ENCODE measurements at regions of chr6 and their contacts with region 1.

Region 1: DNA sequence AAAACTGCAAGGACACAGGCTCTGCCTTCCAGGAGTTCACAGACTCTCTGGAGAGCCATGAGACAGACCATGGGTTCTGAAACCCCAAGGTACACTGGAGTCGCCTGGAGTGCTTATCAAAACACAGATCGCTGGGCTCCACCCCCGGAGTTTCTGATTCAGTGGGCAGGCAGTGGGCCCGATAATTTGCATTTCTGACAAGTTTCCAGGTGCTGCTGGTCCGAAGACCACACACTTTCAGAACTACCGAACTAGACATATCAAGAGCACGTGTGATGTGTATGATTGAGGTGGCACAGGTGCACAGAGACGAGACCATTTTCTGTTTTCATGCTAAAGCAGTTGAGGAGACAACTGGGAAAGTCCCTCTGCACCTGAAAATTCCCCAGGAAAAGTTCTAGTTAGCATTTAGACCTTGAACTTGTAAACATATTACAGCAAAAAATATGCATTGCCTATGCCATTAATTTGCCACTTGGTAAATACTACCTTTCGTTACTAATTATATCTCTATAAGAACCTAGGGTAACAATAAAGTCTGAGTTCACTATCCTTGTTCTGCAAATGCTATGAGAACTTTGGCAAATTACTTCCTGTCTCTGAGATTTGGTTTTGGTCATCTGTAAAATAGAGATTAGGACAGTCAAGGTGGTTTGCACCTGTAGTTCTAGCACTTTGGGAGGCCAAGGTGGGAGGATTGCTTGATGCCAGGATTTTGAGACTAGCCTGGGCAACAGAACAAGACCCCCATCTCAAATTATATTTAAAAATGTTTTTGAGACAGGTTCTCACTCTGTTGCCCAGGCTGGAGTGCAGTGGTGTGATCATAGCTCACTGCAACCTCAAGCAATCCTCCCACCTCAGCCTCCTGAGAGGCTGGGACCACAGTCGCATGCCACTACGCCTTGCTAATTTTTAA is 14.3 kb upstream of the PIM1 start:
- DNase-seq: peak; percentile 91
- ATAC-seq: peak; percentile 88
- H3K4me3 ChIP-seq: peak overlapping the region in 2 of 5 experiments; percentile 23 to 58
- H3K4me3 Mint-ChIP-seq: peak overlapping the region; percentile 50
- H3K27ac ChIP-seq: peak overlapping the region; percentile 89 to 97
- H3K27ac Mint-ChIP-seq: peak overlapping the region; percentile 84
- H3K4me1 ChIP-seq: peaks cover 37 to 41% of the 10 kb centered on the region in 2 donors
- H3K4me1 Mint-ChIP-seq: peaks cover 41% of the 10 kb centered on the region
- H3K27me3 ChIP-seq: no peaks in the 10 kb centered on the region
- H3K27me3 Mint-ChIP-seq: no peaks in the 10 kb centered on the region
- CTCF ChIP-seq: no peak

Region 2: GRCh38 chr6:37102279-37103168 is 53.1 kb before region 1 on chr6:
- CTCF ChIA-PET with region 1: interaction called, 5 read pairs
- POLR2A ChIA-PET with region 1: no interaction called
- intact Hi-C with region 1: loop called (anchors 1 kb)
- DNase-seq: peak; percentile 90
- ATAC-seq: peak; percentile 77
- H3K4me3 ChIP-seq: peak overlapping the region; percentile 2 to 64 (median 50)
- H3K4me3 Mint-ChIP-seq: peak overlapping the region; percentile 89
- H3K27ac ChIP-seq: peak overlapping the region; percentile 1 to 72
- H3K27ac Mint-ChIP-seq: peak overlapping the region; percentile 87
- H3K4me1 ChIP-seq: peaks cover 28 to 37% of the 10 kb centered on the region in 2 donors
- H3K4me1 Mint-ChIP-seq: peaks cover 36% of the 10 kb centered on the region
- H3K27me3 ChIP-seq: no peaks in the 10 kb centered on the region
- H3K27me3 Mint-ChIP-seq: no peaks in the 10 kb centered on the region
- CTCF ChIP-seq: no peak

Region 3: DNA sequence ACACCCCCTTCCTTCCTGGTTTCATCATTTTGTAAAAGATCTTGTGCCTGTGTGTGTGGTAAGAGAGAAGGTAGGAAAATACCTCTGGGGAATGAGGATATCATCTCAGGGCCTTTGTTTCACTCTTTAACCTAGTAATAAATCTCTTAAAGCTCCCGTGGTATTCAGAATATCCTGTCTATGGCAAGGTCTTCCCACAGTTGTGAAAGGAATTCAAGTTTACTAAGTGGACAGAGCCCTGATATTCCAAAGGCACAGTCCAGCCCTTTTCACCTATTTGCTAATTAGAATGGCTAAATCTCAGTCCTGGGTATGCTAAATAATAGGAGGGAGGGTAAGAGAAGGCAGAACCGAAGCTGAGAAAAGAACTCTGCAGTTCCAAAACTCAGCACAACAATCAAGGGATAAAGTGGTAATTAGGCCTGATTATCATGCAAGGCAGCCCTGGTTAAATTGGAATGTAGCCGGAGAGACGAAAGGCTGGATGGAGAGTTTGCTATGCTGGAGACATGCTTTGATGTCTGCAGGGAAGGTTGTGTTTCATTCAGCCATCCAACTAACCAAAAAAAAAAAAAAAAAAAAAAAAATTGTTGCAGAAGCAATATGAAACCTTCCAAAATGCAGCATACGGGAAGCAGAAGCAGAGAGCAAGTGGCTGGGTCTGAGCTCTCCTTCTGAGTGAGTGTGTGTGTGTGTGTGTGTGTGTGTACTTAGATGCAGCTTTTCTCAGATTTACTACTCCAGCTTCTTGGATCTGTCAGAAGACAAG is 14.2 kb before region 1 on chr6:
- CTCF ChIA-PET with region 1: interaction called, 4 read pairs
- POLR2A ChIA-PET with region 1: interaction called, 11 read pairs
- intact Hi-C with region 1: loop called (anchors 2 kb)
- DNase-seq: no peak
- ATAC-seq: no peak
- H3K4me3 ChIP-seq: no peak overlapping the region
- H3K4me3 Mint-ChIP-seq: no peak overlapping the region
- H3K27ac ChIP-seq: no peak overlapping the region
- H3K27ac Mint-ChIP-seq: peak overlapping the region; percentile 12
- H3K4me1 ChIP-seq: peaks cover 0 to 11% of the 10 kb centered on the region in 2 donors
- H3K4me1 Mint-ChIP-seq: peaks cover 34% of the 10 kb centered on the region
- H3K27me3 ChIP-seq: no peaks in the 10 kb centered on the region
- H3K27me3 Mint-ChIP-seq: no peaks in the 10 kb centered on the region
- CTCF ChIP-seq: no peak

Region 4: DNA sequence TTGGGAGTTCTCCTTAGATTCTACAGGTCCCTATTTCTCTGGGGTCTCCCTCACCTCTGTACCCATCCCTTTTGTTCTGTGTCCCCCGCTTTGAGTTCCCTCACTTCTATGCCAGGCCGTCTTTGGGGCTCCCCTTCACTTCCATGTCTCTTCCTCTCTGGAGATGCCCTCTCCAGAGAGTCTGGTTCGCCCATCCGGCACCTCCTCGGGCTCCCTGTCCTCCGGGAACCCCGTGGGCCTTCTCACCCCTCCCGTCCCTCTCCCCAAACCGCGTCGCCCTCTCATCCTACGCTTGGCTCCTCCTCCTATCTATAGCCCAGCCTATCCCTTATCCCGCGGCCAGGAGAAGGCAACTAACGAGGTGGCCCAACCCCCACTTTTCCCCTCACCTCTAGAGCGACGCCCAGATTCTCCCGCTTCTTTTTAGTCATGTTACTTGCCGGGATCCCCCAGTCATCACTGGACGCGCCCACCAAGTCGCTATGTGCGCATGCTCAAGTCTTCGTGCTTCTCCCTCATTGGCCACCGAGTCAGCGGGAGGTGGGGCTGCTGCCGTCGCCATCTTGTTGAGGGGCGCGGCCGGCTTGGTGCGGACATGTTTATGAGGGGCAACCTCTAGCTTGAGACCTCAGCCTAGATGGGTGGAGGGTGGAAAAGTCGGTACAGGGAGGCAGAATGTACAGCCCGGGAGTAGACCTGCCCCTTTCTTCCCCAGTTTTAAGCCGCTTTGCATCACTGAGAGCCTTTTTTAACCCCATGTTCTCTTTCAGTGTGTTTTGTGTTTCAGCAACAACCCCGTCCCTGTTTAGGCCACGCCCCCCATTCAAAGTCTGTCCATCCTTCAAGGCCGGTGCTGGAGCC is 344.0 kb after region 1 on chr6 and contains the start of gene CCDC167:
- CTCF ChIA-PET with region 1: no interaction called
- POLR2A ChIA-PET with region 1: no interaction called
- intact Hi-C with region 1: no loop called
- DNase-seq: peak; percentile 96
- ATAC-seq: peak; percentile 91
- H3K4me3 ChIP-seq: peak within 1 kb of the TSS; percentile 70 to 100 (median 93)
- H3K4me3 Mint-ChIP-seq: peak within 1 kb of the TSS; percentile 95
- H3K27ac ChIP-seq: peak within 1 kb of the TSS; percentile 69 to 90
- H3K27ac Mint-ChIP-seq: peak within 1 kb of the TSS; percentile 88
- H3K4me1 ChIP-seq: peaks cover 46 to 67% of the 10 kb centered on the region in 2 donors
- H3K4me1 Mint-ChIP-seq: peaks cover 67% of the 10 kb centered on the region
- H3K27me3 ChIP-seq: no peaks in the 10 kb centered on the region
- H3K27me3 Mint-ChIP-seq: no peaks in the 10 kb centered on the region
- CTCF ChIP-seq: no peak
- total RNA-seq, gene CCDC167: 9.7 and 11.1 TPM in 2 replicates

Measured in B cell (primary cell).